ENCODE measurements at regions of chr19 and their contacts with region 1.

Region 1: DNA sequence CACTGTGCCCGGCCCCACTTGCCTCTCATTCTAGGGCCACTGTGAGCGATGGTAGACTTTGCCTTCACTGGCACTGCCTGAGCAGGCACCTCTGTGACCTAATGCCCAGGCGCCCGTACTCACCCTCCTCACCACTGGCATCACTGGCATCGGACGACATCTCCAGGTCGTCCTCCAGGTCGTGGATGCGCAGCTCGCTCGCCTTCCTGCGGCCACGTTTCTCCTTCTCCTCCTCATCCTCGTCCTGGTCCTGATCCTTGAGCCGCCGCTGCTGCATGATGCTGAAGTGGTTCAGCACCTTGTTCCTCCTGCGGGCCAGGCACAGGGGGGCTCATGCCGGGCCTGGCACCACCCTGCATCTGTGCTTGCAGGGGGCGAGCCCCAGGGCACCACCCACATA is 7.5 kb upstream of the PSPN start:
- DNase-seq: no peak
- H3K4me3 ChIP-seq: no peak overlapping the region
- H3K27ac ChIP-seq: no peak overlapping the region
- H3K27me3 ChIP-seq: no peaks in the 10 kb centered on the region
- CTCF ChIP-seq: no peak

Region 2: DNA sequence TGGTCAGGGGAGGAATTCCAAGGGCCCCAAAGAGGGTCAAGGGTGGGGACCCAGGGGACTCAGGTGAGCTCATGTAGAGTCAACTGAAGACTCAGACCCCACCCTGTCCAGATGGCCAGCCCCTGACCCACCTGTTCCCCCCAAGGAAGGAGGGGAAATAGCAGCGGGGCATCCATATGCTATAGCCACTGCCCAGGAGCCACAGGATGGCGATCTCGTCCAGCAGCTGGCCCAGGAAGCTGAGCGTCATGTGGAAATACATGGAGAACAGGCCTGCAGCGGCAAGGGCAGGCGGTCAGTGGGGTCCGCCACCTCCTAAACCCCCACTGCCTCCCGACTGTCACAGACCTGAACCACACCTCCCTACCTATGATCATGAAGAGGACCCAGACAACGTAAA is 71.2 kb before region 1 on chr19:
- CTCF ChIA-PET with region 1: no interaction called
- POLR2A ChIA-PET with region 1: interaction called, 11 read pairs
- DNase-seq: no peak
- H3K4me3 ChIP-seq: no peak overlapping the region
- H3K27ac ChIP-seq: no peak overlapping the region
- H3K27me3 ChIP-seq: no peaks in the 10 kb centered on the region
- CTCF ChIP-seq: 0 out of 2 replicates have a peak, but pooled peaks have one; percentile 6

Region 3: DNA sequence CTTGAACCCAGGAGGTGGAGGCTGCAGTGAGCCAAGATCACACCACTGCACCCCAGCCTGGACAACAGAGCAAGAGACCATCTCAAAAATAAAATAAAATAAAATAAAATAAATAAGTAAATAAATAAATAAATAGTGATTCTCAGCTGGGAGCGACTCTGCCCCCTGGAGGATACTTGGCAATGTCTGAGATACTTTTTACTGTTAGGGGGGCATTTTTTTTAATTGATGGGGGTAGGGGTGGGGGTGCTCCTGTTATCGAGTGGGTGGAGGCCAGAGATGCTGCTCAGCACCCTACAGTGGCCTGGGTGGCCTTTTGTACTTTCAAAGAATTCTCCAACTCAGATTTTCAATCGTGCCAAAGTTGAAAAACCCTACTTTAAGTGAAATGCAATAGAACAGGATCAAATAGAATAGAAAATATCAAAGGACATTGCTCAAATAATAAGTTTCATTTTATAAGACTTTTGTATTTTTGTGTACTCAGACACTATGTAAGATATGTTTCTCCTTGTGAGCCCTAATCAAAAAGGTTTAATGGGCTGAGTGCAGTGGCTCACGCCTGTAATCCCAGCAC is 29.0 kb before region 1 on chr19:
- CTCF ChIA-PET with region 1: no interaction called
- POLR2A ChIA-PET with region 1: no interaction called
- DNase-seq: no peak
- H3K4me3 ChIP-seq: no peak overlapping the region
- H3K27ac ChIP-seq: no peak overlapping the region
- H3K27me3 ChIP-seq: no peaks in the 10 kb centered on the region
- CTCF ChIP-seq: peak; percentile 51